T-cell (primary cell): ENCODE measurements at regions of chr10 and their contacts with region 1.

Region 1: DNA sequence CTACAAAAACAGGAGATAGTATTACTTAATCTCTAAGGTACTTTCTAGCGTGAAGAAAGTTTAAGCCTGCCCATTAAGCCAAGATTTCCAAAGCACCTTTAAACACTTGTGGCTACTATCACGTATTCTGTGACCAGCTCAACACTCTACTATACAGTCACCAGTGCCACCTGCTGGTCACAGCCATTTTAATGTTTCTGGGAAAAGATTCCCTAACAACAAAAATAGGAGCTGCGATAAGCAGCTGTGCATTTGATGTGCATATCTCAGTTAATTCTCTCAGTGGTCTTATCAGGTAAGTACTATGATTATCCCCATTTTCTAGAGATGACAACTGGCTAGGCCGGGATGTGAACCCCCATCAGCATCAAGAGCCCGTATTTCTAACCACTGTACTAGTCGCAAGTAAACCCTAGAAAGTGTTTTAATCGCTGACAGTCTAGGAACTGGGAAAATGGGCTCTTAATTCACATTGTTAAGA is 860 bp downstream of the SEC31B start:
- DNase-seq: peak in 27 of 35 experiments; percentile 12 to 77 (median 46)
- ATAC-seq: peak; percentile 65 to 78 (median 72)
- H3K4me3 ChIP-seq: peak overlapping the region in 1 of 2 donors; percentile 46
- H3K4me3 Mint-ChIP-seq: peak overlapping the region in 1 of 3 donors; percentile 17
- H3K27ac ChIP-seq: no peak overlapping the region
- H3K27ac Mint-ChIP-seq: peak overlapping the region in 1 of 2 donors; percentile 28
- H3K4me1 ChIP-seq: peaks cover 7 to 11% of the 10 kb centered on the region in 2 experiments
- H3K4me1 Mint-ChIP-seq: peaks cover 11 to 15% (median 12%) of the 10 kb centered on the region in 3 donors
- H3K27me3 ChIP-seq: no peaks in the 10 kb centered on the region
- H3K27me3 Mint-ChIP-seq: no peaks in the 10 kb centered on the region

Region 2: GRCh38 chr10:100433253-100434240 is 85.3 kb before region 1 on chr10:
- CTCF ChIA-PET with region 1: interaction called, 9 to 15 read pairs
- POLR2A ChIA-PET with region 1: no interaction called
- DNase-seq: peak; percentile 75 to 98 (median 92)
- ATAC-seq: peak; percentile 96 to 99 (median 97)
- H3K4me3 ChIP-seq: no peak overlapping the region
- H3K4me3 Mint-ChIP-seq: no peak overlapping the region
- H3K27ac ChIP-seq: no peak overlapping the region
- H3K27ac Mint-ChIP-seq: no peak overlapping the region
- H3K4me1 ChIP-seq: no peaks in the 10 kb centered on the region
- H3K4me1 Mint-ChIP-seq: no peaks in the 10 kb centered on the region
- H3K27me3 ChIP-seq: no peaks in the 10 kb centered on the region
- H3K27me3 Mint-ChIP-seq: peaks cover 0 to 4% of the 10 kb centered on the region in 2 donors

Region 3: GRCh38 chr10:100481462-100482081 is 37.2 kb before region 1 on chr10:
- CTCF ChIA-PET with region 1: interaction called, 25 to 42 read pairs
- POLR2A ChIA-PET with region 1: no interaction called
- DNase-seq: peak; percentile 76 to 100 (median 90)
- ATAC-seq: peak; percentile 91 to 93 (median 92)
- H3K4me3 ChIP-seq: peak overlapping the region; percentile 53 to 80
- H3K4me3 Mint-ChIP-seq: peak overlapping the region; percentile 79 to 86 (median 85)
- H3K27ac ChIP-seq: no peak overlapping the region
- H3K27ac Mint-ChIP-seq: no peak overlapping the region
- H3K4me1 ChIP-seq: peaks cover 4 to 17% of the 10 kb centered on the region in 2 experiments
- H3K4me1 Mint-ChIP-seq: peaks cover 11 to 22% (median 14%) of the 10 kb centered on the region in 3 donors
- H3K27me3 ChIP-seq: peaks cover 2 to 22% of the 10 kb centered on the region in 2 experiments
- H3K27me3 Mint-ChIP-seq: peaks cover 17 to 23% of the 10 kb centered on the region in 2 donors

Region 4: DNA sequence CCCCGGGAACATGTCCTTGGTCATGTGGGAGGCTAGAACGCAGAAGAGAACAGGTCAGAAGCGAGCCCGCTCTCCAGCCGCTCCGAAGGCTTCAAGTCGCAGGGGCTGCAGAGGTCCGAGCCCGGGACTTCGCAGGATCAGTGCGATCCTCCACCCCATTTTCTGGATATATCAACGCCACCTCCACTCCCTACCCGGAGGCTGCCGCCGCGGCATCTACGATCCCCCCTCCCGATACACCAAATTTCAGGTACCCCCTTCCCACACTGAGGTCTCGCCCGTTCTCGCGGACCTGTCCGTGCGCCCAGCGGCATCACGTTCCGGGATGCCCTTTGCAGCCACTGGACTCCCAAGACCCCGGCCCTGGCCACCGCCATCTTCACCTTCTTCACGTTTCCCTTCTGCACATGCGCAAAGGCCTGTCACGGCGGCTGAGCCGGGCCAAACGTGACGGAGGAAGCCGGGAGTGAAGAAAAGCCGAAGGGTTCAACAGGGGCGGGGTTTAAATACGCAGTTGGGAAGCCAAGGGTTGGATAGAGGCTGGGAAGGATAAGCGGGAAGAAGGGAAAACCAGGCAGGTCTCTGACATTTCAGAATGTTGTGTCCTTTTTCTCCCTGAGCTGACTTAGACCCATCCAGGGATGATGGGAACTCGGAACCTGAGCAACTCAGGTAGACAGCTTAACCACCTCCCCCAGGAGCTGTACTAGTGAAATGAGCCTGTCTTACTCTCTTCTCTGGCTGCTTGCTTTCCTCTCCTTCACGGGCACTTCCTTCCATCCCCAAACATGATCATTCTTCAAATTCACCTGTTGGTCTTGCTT is 10.9 kb after region 1 on chr10 and contains the start of gene NDUFB8:
- CTCF ChIA-PET with region 1: interaction called, 9 to 25 read pairs
- POLR2A ChIA-PET with region 1: no interaction called
- DNase-seq: peak; percentile 73 to 91 (median 83)
- ATAC-seq: peak; percentile 85 to 91 (median 88)
- H3K4me3 ChIP-seq: peak within 1 kb of the TSS; percentile 90 to 95
- H3K4me3 Mint-ChIP-seq: peak within 1 kb of the TSS; percentile 87 to 100 (median 99)
- H3K27ac ChIP-seq: peak within 1 kb of the TSS; percentile 70
- H3K27ac Mint-ChIP-seq: peak within 1 kb of the TSS; percentile 99
- H3K4me1 ChIP-seq: peaks cover 16 to 27% of the 10 kb centered on the region in 2 experiments
- H3K4me1 Mint-ChIP-seq: peaks cover 31 to 43% (median 37%) of the 10 kb centered on the region in 3 donors
- H3K27me3 ChIP-seq: no peaks in the 10 kb centered on the region
- H3K27me3 Mint-ChIP-seq: no peaks in the 10 kb centered on the region
- total RNA-seq, gene NDUFB8: 138 to 175 (median 166) TPM

Region 5: GRCh38 chr10:100535715-100536353 is 17.0 kb after region 1 on chr10 and contains the start of gene HIF1AN:
- CTCF ChIA-PET with region 1: interaction called in 1 of 2 experiments, 25 read pairs
- POLR2A ChIA-PET with region 1: interaction called in 1 of 2 experiments, 4 read pairs
- DNase-seq: peak; percentile 67 to 96 (median 87)
- ATAC-seq: peak; percentile 92 to 100 (median 98)
- H3K4me3 ChIP-seq: peak within 1 kb of the TSS; percentile 81 to 86
- H3K4me3 Mint-ChIP-seq: no peak within 1 kb of the TSS
- H3K27ac ChIP-seq: peak within 1 kb of the TSS; percentile 54
- H3K27ac Mint-ChIP-seq: peak within 1 kb of the TSS; percentile 28 to 48
- H3K4me1 ChIP-seq: peaks cover 17 to 20% of the 10 kb centered on the region in 2 experiments
- H3K4me1 Mint-ChIP-seq: peaks cover 5 to 10% (median 9%) of the 10 kb centered on the region in 3 donors
- H3K27me3 ChIP-seq: no peaks in the 10 kb centered on the region
- H3K27me3 Mint-ChIP-seq: no peaks in the 10 kb centered on the region
- total RNA-seq, gene HIF1AN: 40.9 to 53.4 (median 51.9) TPM